CD4-positive, alpha-beta T cell (primary cell): ENCODE measurements at regions of chr17 and their contacts with region 1.

Region 1: DNA sequence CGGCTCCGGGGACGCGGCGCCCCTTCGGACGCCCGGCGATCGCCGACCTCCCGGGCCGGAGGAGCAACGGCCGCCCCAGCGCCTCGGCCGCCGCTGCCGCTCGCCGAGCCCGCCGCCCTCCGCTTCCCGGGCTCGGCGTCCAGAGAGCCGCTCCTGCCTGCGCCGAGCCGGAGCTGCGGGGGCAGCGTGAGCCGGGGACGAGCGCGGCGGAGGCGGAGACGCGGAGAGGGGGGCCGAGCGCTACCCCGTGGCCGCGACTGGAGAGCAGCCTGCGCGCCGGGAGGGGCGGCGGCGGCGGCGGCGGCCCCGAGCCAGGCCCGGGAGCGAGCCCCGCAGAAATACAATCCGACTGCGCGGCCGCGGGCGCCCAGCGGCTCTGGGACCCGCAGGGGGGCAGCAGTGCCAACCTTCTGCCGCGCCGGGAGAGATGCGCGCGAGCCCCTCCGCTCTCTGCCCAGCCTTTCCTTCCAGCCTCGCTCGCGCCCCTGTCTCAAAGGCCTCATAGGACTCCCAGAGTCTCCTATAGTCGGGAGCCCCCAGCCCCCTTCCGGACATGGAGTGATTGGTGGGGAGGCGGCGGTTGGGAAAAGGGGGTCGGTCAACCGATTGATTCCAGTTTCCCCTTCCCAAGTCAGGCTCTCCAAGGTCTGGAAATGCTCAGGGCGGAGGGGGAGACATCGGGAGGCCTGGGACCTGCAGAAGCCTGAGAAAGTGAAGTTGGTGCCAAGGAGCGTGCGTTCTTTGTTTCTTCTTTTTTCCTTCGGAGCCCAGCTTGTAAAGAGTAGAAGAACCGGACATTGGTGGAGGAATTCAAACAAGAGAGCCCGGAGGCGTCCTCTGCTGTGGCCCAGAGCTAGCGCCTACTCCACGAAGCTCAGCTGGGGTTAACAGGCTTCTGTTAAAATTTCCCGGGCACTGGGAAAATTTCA is 1.1 kb upstream of the SDK2 start:
- DNase-seq: peak in 11 of 14 experiments; percentile 13 to 72 (median 48)
- ATAC-seq: peak; percentile 57
- H3K4me3 ChIP-seq: no peak overlapping the region
- H3K4me3 Mint-ChIP-seq: peak overlapping the region; percentile 90
- H3K27ac ChIP-seq: no peak overlapping the region
- H3K27ac Mint-ChIP-seq: no peak overlapping the region
- H3K4me1 ChIP-seq: peaks cover 29% of the 10 kb centered on the region
- H3K4me1 Mint-ChIP-seq: peaks cover 22% of the 10 kb centered on the region
- H3K27me3 ChIP-seq: peaks cover 13 to 32% of the 10 kb centered on the region in 2 experiments
- H3K27me3 Mint-ChIP-seq: peaks cover 7% of the 10 kb centered on the region
- CTCF ChIP-seq: peak; percentile 14

Region 2: GRCh38 chr17:73595479-73595878 is 49.8 kb before region 1 on chr17:
- CTCF ChIA-PET with region 1: no interaction called
- POLR2A ChIA-PET with region 1: interaction called, 25 read pairs
- intact Hi-C with region 1: loop called (anchors 2 kb)
- DNase-seq: peak in 8 of 14 experiments; percentile 12 to 30 (median 25)
- ATAC-seq: no peak
- H3K4me3 ChIP-seq: no peak overlapping the region
- H3K4me3 Mint-ChIP-seq: no peak overlapping the region
- H3K27ac ChIP-seq: peak overlapping the region in 1 of 2 donors; percentile 10
- H3K27ac Mint-ChIP-seq: peak overlapping the region; percentile 90
- H3K4me1 ChIP-seq: peaks cover 61% of the 10 kb centered on the region
- H3K4me1 Mint-ChIP-seq: peaks cover 67% of the 10 kb centered on the region
- H3K27me3 ChIP-seq: no peaks in the 10 kb centered on the region
- H3K27me3 Mint-ChIP-seq: no peaks in the 10 kb centered on the region
- CTCF ChIP-seq: peak; percentile 24

Region 3: GRCh38 chr17:73625991-73626673 is 19.2 kb before region 1 on chr17:
- CTCF ChIA-PET with region 1: no interaction called
- POLR2A ChIA-PET with region 1: no interaction called
- intact Hi-C with region 1: no loop called
- DNase-seq: no peak
- ATAC-seq: no peak
- H3K4me3 ChIP-seq: no peak overlapping the region
- H3K4me3 Mint-ChIP-seq: no peak overlapping the region
- H3K27ac ChIP-seq: no peak overlapping the region
- H3K27ac Mint-ChIP-seq: no peak overlapping the region
- H3K4me1 ChIP-seq: no peaks in the 10 kb centered on the region
- H3K4me1 Mint-ChIP-seq: no peaks in the 10 kb centered on the region
- H3K27me3 ChIP-seq: no peaks in the 10 kb centered on the region
- H3K27me3 Mint-ChIP-seq: no peaks in the 10 kb centered on the region
- CTCF ChIP-seq: no peak

Region 4: DNA sequence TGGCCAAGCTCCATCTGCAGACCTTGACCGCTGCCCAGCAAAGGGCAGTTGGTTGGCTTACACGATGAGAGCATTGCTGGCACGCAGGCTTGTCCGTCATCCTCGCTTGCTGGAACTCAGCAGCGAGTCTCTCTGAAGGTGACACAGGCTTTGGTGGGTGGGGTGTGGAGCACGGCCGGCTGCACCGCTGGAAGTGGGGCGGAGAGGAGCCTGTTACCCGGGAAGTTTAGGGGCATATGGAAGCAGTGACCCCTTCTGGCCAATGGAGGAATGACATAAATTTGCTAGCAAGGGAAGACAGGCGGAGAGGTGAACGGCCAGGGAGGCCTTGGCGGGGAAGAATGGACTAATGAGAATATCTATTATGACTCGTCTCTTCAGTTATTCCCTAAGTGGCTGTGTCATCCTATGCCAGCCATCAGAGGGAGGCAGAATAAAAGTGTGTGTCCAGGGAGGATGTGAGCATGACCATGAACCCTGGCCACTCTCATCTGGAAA is 64.8 kb after region 1 on chr17:
- CTCF ChIA-PET with region 1: no interaction called
- POLR2A ChIA-PET with region 1: no interaction called
- intact Hi-C with region 1: loop called (anchors 5 kb)
- DNase-seq: peak; percentile 38 to 84 (median 60)
- ATAC-seq: peak; percentile 79
- H3K4me3 ChIP-seq: no peak overlapping the region
- H3K4me3 Mint-ChIP-seq: no peak overlapping the region
- H3K27ac ChIP-seq: no peak overlapping the region
- H3K27ac Mint-ChIP-seq: peak overlapping the region; percentile 4
- H3K4me1 ChIP-seq: peaks cover 15% of the 10 kb centered on the region
- H3K4me1 Mint-ChIP-seq: peaks cover 17% of the 10 kb centered on the region
- H3K27me3 ChIP-seq: no peaks in the 10 kb centered on the region
- H3K27me3 Mint-ChIP-seq: no peaks in the 10 kb centered on the region
- CTCF ChIP-seq: peak; percentile 91

Region 5: DNA sequence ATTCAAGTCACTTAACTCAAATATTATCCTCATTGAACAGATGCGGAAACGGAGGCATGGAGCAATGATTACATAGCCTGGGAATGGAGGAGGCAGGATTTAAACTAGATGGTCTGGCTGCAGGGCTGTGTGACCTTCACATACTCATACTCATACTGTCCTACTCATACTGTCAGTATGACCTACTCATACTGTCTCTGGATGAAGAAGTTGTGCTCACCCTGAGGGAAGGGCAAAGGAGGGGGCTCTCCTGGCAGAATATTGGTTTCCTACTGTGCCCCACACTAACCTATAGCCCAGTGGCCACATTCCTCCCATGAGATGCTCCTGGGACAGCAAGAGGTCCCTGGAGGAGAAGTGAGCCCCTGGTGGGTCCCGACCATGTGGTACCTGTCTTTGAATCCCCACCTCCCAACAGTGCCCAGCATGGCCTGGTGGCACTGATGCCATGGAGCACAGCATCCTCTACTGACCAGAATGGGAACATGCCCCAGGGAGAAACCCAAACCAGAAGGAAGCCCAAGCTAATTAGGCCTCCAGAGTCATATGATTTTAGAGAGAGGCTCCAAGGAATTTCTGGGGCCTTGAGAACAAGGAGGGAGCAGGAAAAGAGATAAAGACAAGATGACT is 196.2 kb after region 1 on chr17:
- CTCF ChIA-PET with region 1: no interaction called
- POLR2A ChIA-PET with region 1: no interaction called
- intact Hi-C with region 1: loop called (anchors 2 to 5 kb)
- DNase-seq: peak in 8 of 14 experiments; percentile 11 to 49 (median 29)
- ATAC-seq: peak; percentile 73
- H3K4me3 ChIP-seq: no peak overlapping the region
- H3K4me3 Mint-ChIP-seq: no peak overlapping the region
- H3K27ac ChIP-seq: no peak overlapping the region
- H3K27ac Mint-ChIP-seq: no peak overlapping the region
- H3K4me1 ChIP-seq: peaks cover 4% of the 10 kb centered on the region
- H3K4me1 Mint-ChIP-seq: peaks cover 26% of the 10 kb centered on the region
- H3K27me3 ChIP-seq: no peaks in the 10 kb centered on the region
- H3K27me3 Mint-ChIP-seq: no peaks in the 10 kb centered on the region
- CTCF ChIP-seq: peak; percentile 71

Region 6: DNA sequence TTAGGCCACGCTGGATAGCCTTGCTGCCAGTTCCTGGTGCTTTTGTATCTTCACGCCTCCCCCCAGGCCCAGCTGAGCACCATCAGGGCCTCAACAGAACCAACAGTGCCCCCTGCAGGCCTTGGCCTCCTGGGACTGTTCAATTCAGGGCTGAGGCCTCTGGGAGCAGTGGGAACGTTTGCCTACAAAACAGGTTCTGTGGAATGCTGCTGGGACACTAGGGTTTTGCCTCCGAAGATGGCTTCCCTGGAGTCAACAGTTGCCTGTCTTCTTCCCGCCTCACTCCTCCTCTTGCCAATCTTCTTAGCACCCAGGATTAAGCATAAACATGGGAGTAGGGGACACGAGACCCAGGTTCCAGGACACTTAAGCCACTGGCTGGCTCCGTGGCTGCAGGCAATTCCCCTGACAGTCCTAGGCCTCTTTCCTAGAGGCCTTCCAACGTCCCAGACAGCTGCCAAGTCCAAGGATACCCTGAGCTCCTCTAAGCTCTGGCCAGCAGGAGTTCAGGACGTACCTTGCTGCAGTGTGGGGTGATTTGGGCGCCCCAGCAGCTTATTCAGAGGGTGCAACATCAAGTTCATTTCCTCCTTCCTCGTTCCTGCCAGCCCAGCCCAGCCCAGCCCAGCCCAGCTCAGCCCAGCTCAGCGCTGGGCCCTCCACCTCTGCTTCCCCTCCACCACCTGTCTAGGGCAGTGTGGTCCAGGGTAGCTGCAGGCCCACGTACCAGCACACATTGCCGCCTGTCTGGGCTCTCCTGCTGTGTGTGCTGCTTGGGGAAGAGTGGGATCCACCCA is 311.6 kb after region 1 on chr17:
- CTCF ChIA-PET with region 1: no interaction called
- POLR2A ChIA-PET with region 1: no interaction called
- intact Hi-C with region 1: loop called (anchors 2 to 5 kb)
- DNase-seq: peak; percentile 35 to 71 (median 54)
- ATAC-seq: peak; percentile 66
- H3K4me3 ChIP-seq: no peak overlapping the region
- H3K4me3 Mint-ChIP-seq: no peak overlapping the region
- H3K27ac ChIP-seq: no peak overlapping the region
- H3K27ac Mint-ChIP-seq: no peak overlapping the region
- H3K4me1 ChIP-seq: peaks cover 13% of the 10 kb centered on the region
- H3K4me1 Mint-ChIP-seq: peaks cover 3% of the 10 kb centered on the region
- H3K27me3 ChIP-seq: peaks cover 13 to 14% of the 10 kb centered on the region in 2 experiments
- H3K27me3 Mint-ChIP-seq: peaks cover 4% of the 10 kb centered on the region
- CTCF ChIP-seq: peak; percentile 63

Region 7: DNA sequence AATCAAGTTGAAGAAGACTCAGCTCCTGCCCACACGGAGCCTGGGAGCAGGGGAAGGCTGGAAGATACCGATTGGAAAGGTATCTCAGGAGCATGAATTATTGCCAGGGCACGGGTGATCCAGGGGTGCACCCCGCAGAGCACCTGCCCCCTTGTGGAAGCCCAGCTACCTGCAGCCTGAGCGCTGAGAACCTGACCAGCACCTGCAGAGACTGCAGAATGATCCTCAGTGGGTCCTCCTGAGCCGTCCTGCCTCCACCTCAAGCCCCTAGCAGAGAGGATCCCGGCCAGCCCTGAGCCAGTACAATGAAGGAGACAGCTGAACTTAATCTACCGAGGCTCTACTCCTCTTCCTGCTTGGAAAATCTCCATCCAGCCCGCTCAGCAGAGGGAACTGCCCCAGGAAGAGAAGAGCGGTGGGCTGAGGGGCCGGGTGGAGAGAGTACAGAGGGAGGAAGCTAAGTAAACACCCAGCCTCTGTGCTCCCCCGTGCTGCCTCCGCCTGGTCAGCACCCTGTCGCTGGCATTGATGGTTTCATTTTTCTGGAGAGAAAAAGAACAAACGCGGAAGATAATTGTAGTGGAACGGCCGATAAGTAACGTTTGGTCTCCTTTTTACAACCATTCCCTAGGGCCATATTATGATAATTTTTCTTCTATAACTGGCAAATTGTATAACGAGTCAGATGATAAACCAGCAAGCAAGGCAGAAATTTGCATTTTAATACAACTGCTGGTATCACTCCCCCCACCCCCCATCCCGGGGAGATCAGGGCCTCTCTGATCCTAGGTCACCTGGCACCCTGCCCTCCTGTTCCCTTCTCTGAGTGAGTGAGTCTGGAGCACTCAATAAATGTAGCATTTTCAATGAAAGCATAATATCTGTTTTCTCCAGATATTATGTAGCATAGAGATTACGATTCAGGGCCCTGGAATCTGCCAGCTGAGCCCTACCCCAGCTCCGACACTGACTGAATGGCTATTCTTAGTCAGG is 353.6 kb after region 1 on chr17:
- CTCF ChIA-PET with region 1: no interaction called
- POLR2A ChIA-PET with region 1: no interaction called
- intact Hi-C with region 1: loop called (anchors 2 kb)
- DNase-seq: peak; percentile 53 to 73 (median 62)
- ATAC-seq: peak; percentile 77
- H3K4me3 ChIP-seq: no peak overlapping the region
- H3K4me3 Mint-ChIP-seq: no peak overlapping the region
- H3K27ac ChIP-seq: no peak overlapping the region
- H3K27ac Mint-ChIP-seq: no peak overlapping the region
- H3K4me1 ChIP-seq: no peaks in the 10 kb centered on the region
- H3K4me1 Mint-ChIP-seq: peaks cover 4% of the 10 kb centered on the region
- H3K27me3 ChIP-seq: no peaks in the 10 kb centered on the region
- H3K27me3 Mint-ChIP-seq: peaks cover 17% of the 10 kb centered on the region
- CTCF ChIP-seq: peak; percentile 79

Region 8: DNA sequence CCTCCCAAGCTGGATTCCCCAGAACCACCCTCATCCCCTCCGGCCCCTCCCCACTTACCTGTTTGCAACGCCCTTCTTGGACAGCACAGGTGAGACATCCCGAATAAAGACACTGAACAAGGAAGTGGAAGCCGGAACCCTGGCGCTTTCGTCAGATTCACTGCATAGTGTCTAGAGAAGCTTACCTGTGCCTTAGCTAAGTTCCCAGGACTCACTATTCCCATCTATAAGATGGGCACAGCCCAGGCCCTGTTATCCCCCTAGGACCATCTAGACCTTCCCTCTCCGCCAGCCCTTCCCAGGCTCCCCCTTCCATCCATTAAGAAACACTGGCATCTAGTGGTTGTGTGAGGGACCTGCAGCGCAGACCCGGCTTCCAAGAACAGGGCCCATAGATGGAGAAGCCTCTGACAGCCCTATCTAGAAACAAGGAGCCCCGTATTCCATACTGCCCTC is 531.3 kb after region 1 on chr17:
- CTCF ChIA-PET with region 1: no interaction called
- POLR2A ChIA-PET with region 1: no interaction called
- intact Hi-C with region 1: loop called in 1 of 2 experiments (anchors 10 kb)
- DNase-seq: peak in 10 of 14 experiments; percentile 8 to 54 (median 32)
- ATAC-seq: peak; percentile 70
- H3K4me3 ChIP-seq: no peak overlapping the region
- H3K4me3 Mint-ChIP-seq: no peak overlapping the region
- H3K27ac ChIP-seq: no peak overlapping the region
- H3K27ac Mint-ChIP-seq: no peak overlapping the region
- H3K4me1 ChIP-seq: no peaks in the 10 kb centered on the region
- H3K4me1 Mint-ChIP-seq: no peaks in the 10 kb centered on the region
- H3K27me3 ChIP-seq: peaks cover 8 to 20% of the 10 kb centered on the region in 2 experiments
- H3K27me3 Mint-ChIP-seq: peaks cover 55% of the 10 kb centered on the region
- CTCF ChIP-seq: peak; percentile 52